ENCODE measurements at regions of chr1 and their contacts with region 1.

Region 1: DNA sequence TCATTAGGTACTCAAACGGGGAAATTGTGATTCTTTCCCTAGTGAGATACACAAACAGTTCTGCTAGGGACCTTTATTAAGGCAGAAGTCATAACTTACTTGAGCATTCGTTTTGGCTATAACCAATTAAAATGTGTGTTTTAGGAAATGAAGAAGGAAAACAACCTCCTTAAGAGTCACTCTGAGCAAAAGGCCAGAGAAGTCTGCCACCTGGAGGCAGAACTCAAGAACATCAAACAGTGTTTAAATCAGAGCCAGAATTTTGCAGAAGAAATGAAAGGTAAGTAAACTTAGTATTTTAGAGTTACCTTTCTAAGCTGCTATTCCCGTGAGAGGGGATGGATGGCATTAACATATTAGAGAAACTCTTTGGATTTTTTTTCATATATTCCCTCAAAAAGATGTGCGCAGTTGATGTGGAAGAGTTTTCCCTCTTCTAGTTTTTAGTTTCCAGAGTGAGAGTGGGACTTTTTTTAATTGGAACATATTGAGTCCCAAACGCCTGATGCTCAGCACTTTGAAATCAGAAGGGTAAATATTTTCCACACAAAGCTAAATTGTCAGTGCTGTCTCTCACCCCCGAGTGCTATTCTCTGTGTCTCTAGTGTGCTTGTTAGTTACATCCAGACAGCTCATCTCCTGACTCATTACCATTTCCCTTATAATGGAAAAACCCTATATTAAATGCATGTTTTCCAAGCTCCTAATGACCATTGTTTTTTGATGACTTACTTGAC is 34.9 kb downstream of the CENPF start:
- DNase-seq: peak in 3 of 5 donors; percentile 33 to 40 (median 37)
- H3K4me3 ChIP-seq: no peak overlapping the region
- H3K4me3 Mint-ChIP-seq: peak overlapping the region in 7 of 8 donors; percentile 29 to 74 (median 46)
- H3K27ac ChIP-seq: no peak overlapping the region
- H3K27ac Mint-ChIP-seq: peak overlapping the region in 6 of 7 donors; percentile 32 to 88 (median 68)
- H3K4me1 ChIP-seq: peaks cover 60% of the 10 kb centered on the region
- H3K4me1 Mint-ChIP-seq: peaks cover 14 to 34% (median 21%) of the 10 kb centered on the region in 4 donors
- H3K27me3 ChIP-seq: no peaks in the 10 kb centered on the region
- H3K27me3 Mint-ChIP-seq: no peaks in the 10 kb centered on the region

Region 2: GRCh38 chr1:214213136-214213535 is 424.8 kb before region 1 on chr1:
- CTCF ChIA-PET with region 1: no interaction called
- POLR2A ChIA-PET with region 1: no interaction called
- intact Hi-C with region 1: loop called (anchors 5 kb)
- DNase-seq: no peak
- H3K4me3 ChIP-seq: no peak overlapping the region
- H3K4me3 Mint-ChIP-seq: no peak overlapping the region
- H3K27ac ChIP-seq: no peak overlapping the region
- H3K27ac Mint-ChIP-seq: no peak overlapping the region
- H3K4me1 ChIP-seq: no peaks in the 10 kb centered on the region
- H3K4me1 Mint-ChIP-seq: peaks cover 0 to 5% (median 3%) of the 10 kb centered on the region in 4 donors
- H3K27me3 ChIP-seq: no peaks in the 10 kb centered on the region
- H3K27me3 Mint-ChIP-seq: peaks cover 13 to 16% of the 10 kb centered on the region in 2 donors

Region 3: DNA sequence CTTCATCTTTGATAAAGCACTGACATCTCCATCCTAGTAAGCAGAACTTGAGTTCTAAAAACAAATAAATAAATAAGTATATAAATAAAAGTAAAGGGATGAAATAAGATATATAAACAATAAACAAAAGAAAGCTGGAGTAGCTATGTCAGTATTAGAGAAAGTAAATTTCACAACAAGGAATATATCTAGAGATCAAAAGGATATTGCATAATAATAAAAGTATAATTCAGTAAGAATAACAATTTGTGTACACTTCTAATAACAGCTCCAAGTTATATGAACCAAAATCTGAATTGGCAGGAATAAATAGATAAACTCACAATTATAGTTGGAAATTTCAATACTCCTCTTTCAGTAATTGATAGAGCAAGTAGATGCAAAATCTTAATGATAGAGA is 44.7 kb before region 1 on chr1:
- CTCF ChIA-PET with region 1: interaction called, 11 read pairs
- POLR2A ChIA-PET with region 1: no interaction called
- intact Hi-C with region 1: no loop called
- DNase-seq: no peak
- H3K4me3 ChIP-seq: no peak overlapping the region
- H3K4me3 Mint-ChIP-seq: no peak overlapping the region
- H3K27ac ChIP-seq: no peak overlapping the region
- H3K27ac Mint-ChIP-seq: no peak overlapping the region
- H3K4me1 ChIP-seq: no peaks in the 10 kb centered on the region
- H3K4me1 Mint-ChIP-seq: no peaks in the 10 kb centered on the region
- H3K27me3 ChIP-seq: no peaks in the 10 kb centered on the region
- H3K27me3 Mint-ChIP-seq: peaks cover 3 to 4% of the 10 kb centered on the region in 2 donors

Region 4: DNA sequence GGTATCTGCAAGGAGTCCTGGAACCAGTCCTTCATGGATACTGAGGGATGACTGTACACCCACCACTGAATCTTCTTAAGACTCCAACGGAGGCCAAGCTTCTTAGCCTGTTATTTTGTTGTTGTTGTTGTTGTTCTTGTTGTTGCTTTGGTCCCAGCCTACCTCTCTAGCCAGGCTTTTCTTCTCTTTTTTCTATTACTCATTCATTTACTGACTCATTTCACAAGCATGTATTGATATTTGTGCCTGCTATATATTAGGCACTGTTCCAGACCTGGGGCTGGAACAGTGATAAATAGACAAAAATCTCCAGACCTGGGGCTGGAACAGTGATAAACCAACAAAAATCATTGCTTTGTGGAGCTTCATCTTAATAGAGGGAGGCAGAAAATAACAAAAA is 14.5 kb before region 1 on chr1:
- CTCF ChIA-PET with region 1: interaction called, 121 read pairs
- POLR2A ChIA-PET with region 1: interaction called, 4 read pairs
- intact Hi-C with region 1: loop called (anchors 1 kb)
- DNase-seq: no peak
- H3K4me3 ChIP-seq: no peak overlapping the region
- H3K4me3 Mint-ChIP-seq: no peak overlapping the region
- H3K27ac ChIP-seq: no peak overlapping the region
- H3K27ac Mint-ChIP-seq: no peak overlapping the region
- H3K4me1 ChIP-seq: no peaks in the 10 kb centered on the region
- H3K4me1 Mint-ChIP-seq: peaks cover 0 to 5% (median 2%) of the 10 kb centered on the region in 4 donors
- H3K27me3 ChIP-seq: no peaks in the 10 kb centered on the region
- H3K27me3 Mint-ChIP-seq: no peaks in the 10 kb centered on the region

Region 5: GRCh38 chr1:214648801-214649200 is 10.9 kb after region 1 on chr1:
- CTCF ChIA-PET with region 1: interaction called, 49 read pairs
- POLR2A ChIA-PET with region 1: no interaction called
- intact Hi-C with region 1: no loop called
- DNase-seq: no peak
- H3K4me3 ChIP-seq: no peak overlapping the region
- H3K4me3 Mint-ChIP-seq: no peak overlapping the region
- H3K27ac ChIP-seq: no peak overlapping the region
- H3K27ac Mint-ChIP-seq: no peak overlapping the region
- H3K4me1 ChIP-seq: peaks cover 5% of the 10 kb centered on the region
- H3K4me1 Mint-ChIP-seq: peaks cover 1 to 18% (median 9%) of the 10 kb centered on the region in 4 donors
- H3K27me3 ChIP-seq: no peaks in the 10 kb centered on the region
- H3K27me3 Mint-ChIP-seq: no peaks in the 10 kb centered on the region

Region 6: DNA sequence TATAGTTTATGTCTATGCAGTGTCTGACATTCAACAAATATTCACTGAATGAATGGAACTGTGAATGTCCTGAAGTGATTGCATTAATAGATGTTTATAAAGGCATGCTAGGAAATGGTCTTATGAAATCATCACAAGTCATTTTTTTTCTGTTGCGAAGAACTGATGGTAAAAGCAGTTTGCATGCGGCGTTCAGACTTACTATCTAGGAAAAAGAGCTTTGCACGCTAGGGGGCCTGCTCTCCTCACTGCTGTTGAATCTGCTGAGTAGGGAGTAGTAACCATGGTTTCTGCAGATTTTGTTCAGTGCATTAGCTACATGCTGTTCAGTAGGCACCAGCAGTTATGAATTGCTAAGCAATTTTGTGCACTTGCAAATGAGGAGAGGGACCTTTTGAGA is 23.0 kb after region 1 on chr1:
- CTCF ChIA-PET with region 1: interaction called, 13 read pairs
- POLR2A ChIA-PET with region 1: no interaction called
- intact Hi-C with region 1: no loop called
- DNase-seq: no peak
- H3K4me3 ChIP-seq: no peak overlapping the region
- H3K4me3 Mint-ChIP-seq: no peak overlapping the region
- H3K27ac ChIP-seq: no peak overlapping the region
- H3K27ac Mint-ChIP-seq: no peak overlapping the region
- H3K4me1 ChIP-seq: no peaks in the 10 kb centered on the region
- H3K4me1 Mint-ChIP-seq: no peaks in the 10 kb centered on the region
- H3K27me3 ChIP-seq: no peaks in the 10 kb centered on the region
- H3K27me3 Mint-ChIP-seq: no peaks in the 10 kb centered on the region

Region 7: GRCh38 chr1:214923278-214923915 is 285.5 kb after region 1 on chr1:
- CTCF ChIA-PET with region 1: no interaction called
- POLR2A ChIA-PET with region 1: no interaction called
- intact Hi-C with region 1: no loop called
- DNase-seq: no peak
- H3K4me3 ChIP-seq: no peak overlapping the region
- H3K4me3 Mint-ChIP-seq: no peak overlapping the region
- H3K27ac ChIP-seq: no peak overlapping the region
- H3K27ac Mint-ChIP-seq: no peak overlapping the region
- H3K4me1 ChIP-seq: no peaks in the 10 kb centered on the region
- H3K4me1 Mint-ChIP-seq: no peaks in the 10 kb centered on the region
- H3K27me3 ChIP-seq: no peaks in the 10 kb centered on the region
- H3K27me3 Mint-ChIP-seq: no peaks in the 10 kb centered on the region